ENCODE measurements at regions of chr2 and their contacts with region 1.

Region 1: DNA sequence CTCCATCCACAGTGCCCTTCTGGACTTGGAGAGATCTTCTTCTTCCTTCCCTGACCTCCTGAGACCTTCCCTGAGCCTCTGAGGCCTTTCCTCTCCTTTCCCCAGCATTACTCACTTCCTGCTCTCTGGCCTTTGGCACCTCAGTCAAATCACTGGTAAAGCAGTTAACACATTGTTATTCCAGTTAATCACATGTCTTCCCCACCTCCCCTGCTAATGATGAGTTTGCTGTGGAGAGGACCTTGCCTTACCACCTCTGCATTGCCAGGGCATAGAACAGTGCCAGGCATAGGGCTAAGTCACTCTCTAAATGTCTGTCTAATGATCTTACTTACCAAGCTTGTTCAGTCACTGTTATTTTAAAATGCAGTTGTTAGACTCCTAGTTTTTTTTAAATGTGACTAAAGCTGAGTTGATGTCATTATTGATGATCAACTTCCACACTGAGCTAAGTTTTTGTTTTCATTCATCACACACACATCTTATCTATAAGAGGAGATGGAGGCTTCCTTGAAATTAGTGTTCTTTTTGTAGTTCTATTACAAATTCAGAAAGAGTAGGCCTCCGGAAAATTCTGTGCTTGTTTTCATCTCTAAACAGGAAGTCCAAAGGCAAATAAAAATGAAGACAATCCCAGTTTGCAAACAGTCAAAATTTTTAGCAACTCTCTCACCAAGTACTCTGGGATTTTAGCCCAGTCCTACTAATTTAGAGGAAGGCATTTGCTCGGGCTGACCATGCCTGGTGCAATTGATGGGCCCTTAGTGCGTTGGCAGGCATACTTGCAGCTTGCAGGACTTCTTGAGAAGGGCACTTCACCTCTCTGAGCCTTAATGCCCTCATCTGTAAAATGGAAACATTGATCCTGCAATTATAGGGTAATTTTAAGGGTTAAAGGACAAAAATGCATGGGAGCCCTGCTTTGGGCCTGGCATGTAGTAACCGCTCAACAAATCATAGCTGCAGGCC is 113.7 kb upstream of the SPRED2 start:
- DNase-seq: no peak

Region 2: DNA sequence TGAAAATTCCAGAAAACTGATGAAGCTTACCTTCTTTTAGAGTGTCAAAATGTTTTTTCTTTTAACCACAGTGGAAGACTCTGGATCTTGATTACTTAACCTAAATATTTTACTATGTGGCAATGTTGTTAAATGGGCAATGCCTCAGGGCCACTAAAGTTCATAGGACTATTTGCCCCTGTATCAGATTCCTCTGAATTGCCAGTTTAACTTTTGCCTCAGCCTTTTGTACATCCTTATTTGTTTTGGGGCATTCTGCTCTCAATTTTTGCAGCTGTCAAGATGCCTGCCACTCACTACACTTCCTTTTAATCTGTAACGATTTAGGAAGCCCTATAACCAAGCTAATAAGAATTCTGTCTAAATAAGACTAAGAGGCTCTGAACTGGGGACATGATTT is 860.7 kb before region 1 on chr2:
- in situ Hi-C with region 1: no loop called
- DNase-seq: no peak

Region 3: GRCh38 chr2:65164426-65164891 is 381.7 kb before region 1 on chr2:
- in situ Hi-C with region 1: no loop called
- DNase-seq: peak; percentile 56

Region 4: DNA sequence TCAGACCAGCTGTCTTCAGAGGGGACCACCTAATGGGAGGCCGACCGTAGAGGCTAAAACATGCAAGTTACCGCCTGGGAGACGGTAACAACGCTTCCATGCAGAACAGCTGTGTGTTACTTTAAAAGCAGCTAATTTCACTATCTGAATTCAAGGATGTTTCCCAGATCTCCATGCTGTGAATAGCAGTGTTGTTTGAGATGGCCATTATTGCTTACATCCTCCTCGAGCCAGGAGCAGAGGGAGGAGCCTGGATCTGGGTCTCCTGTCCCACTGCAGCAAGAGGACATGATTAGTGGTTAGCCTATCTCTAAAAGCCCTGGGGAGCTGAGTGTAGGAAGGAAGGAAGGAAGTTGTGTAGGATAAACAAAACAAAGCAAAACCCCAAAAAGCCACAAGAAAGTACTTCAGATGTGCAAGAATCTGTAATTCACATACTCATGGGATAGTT is 267.6 kb before region 1 on chr2:
- in situ Hi-C with region 1: loop called (anchors 25 kb)
- DNase-seq: peak; percentile 53